HepG2 (cell line): ENCODE measurements at regions of chr5 and their contacts with region 1.

Region 1: DNA sequence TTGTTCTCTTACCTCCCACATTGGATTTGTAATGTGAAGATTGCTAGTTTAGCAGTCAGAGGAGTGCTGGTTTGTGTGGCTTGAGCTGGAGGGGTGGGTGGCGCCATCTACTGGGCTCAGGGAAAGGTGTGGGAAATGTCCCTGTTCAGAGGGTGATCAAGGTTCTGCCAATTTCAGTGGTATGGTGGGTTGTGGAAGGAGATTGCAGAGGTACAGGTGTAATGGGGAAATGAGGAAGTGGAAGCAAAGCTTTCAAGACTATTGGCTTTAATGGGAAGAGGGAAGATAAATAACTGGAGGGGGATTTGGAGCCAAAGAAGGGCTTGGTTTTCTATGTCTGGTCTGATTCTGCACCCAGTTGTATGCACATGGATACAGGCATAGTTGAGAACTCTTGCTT is 76.4 kb downstream of the OSMR start:
- DNase-seq: peak; percentile 29
- ATAC-seq: peak; percentile 92
- H3K4me3 ChIP-seq: no peak overlapping the region
- H3K27ac ChIP-seq: no peak overlapping the region
- H3K4me1 ChIP-seq: peaks cover 8% of the 10 kb centered on the region
- H3K27me3 ChIP-seq: no peaks in the 10 kb centered on the region
- CTCF ChIP-seq: peak; percentile 80
- EP300 ChIP-seq: no peak
- POLR2A ChIP-seq: no peak
- RAD21 ChIP-seq: peak; percentile 47; the same call in 1 of the 2 replicates

Region 2: GRCh38 chr5:38831909-38832308 is 90.3 kb before region 1 on chr5:
- CTCF ChIA-PET with region 1: interaction called, 4 read pairs
- POLR2A ChIA-PET with region 1: no interaction called
- in situ Hi-C with region 1: no loop called
- intact Hi-C with region 1: loop called (anchors 2 kb)
- DNase-seq: peak; percentile 14
- ATAC-seq: peak; percentile 7; the same call in 2 of the 3 replicates
- H3K4me3 ChIP-seq: no peak overlapping the region
- H3K27ac ChIP-seq: peak overlapping the region; percentile 30
- H3K4me1 ChIP-seq: peaks cover 39% of the 10 kb centered on the region
- H3K27me3 ChIP-seq: no peaks in the 10 kb centered on the region
- CTCF ChIP-seq: peak; percentile 47
- EP300 ChIP-seq: no peak
- POLR2A ChIP-seq: no peak
- RAD21 ChIP-seq: no peak

Region 3: GRCh38 chr5:39014544-39014943 is 92.3 kb after region 1 on chr5:
- CTCF ChIA-PET with region 1: no interaction called
- POLR2A ChIA-PET with region 1: no interaction called
- in situ Hi-C with region 1: no loop called
- intact Hi-C with region 1: no loop called
- DNase-seq: peak; percentile 6
- ATAC-seq: no peak
- H3K4me3 ChIP-seq: no peak overlapping the region
- H3K27ac ChIP-seq: no peak overlapping the region
- H3K4me1 ChIP-seq: peaks cover 12% of the 10 kb centered on the region
- H3K27me3 ChIP-seq: no peaks in the 10 kb centered on the region
- CTCF ChIP-seq: no peak
- EP300 ChIP-seq: no peak
- POLR2A ChIP-seq: no peak
- RAD21 ChIP-seq: no peak

Region 4: GRCh38 chr5:39053189-39053588 is 131.0 kb after region 1 on chr5:
- CTCF ChIA-PET with region 1: no interaction called
- POLR2A ChIA-PET with region 1: no interaction called
- in situ Hi-C with region 1: no loop called
- intact Hi-C with region 1: no loop called
- DNase-seq: no peak
- ATAC-seq: no peak
- H3K4me3 ChIP-seq: no peak overlapping the region
- H3K27ac ChIP-seq: no peak overlapping the region
- H3K4me1 ChIP-seq: peaks cover 36% of the 10 kb centered on the region
- H3K27me3 ChIP-seq: no peaks in the 10 kb centered on the region
- CTCF ChIP-seq: no peak
- EP300 ChIP-seq: no peak
- POLR2A ChIP-seq: no peak
- RAD21 ChIP-seq: no peak